ENCODE measurements at regions of chr20 and their contacts with region 1.

Region 1: GRCh38 chr20:38221119-38221589 is 39.4 kb downstream of the KIAA1755 start:
- DNase-seq: peak; percentile 73 to 91
- ATAC-seq: peak; percentile 72 to 81
- H3K4me3 ChIP-seq: no peak overlapping the region
- H3K27ac ChIP-seq: peak overlapping the region; percentile 90 to 98
- H3K4me1 ChIP-seq: peaks cover 51% of the 10 kb centered on the region
- CTCF ChIP-seq: peak; percentile 94
- EP300 ChIP-seq: no peak
- POLR2A ChIP-seq: no peak
- RAD21 ChIP-seq: peak; percentile 97 to 99

Region 2: GRCh38 chr20:38043512-38044300 is 177.4 kb before region 1 on chr20:
- CTCF ChIA-PET with region 1: interaction called, 356 read pairs
- POLR2A ChIA-PET with region 1: interaction called, 3 read pairs
- DNase-seq: peak; percentile 73 to 80
- ATAC-seq: peak; percentile 99 to 100
- H3K4me3 ChIP-seq: no peak overlapping the region
- H3K27ac ChIP-seq: peak overlapping the region in 1 of 2 experiments; percentile 41; a peak in 2 of 6 replicates
- H3K4me1 ChIP-seq: peaks cover 15% of the 10 kb centered on the region
- CTCF ChIP-seq: no peak
- EP300 ChIP-seq: no peak
- POLR2A ChIP-seq: no peak
- RAD21 ChIP-seq: no peak

Region 3: GRCh38 chr20:38094373-38094891 is 126.7 kb before region 1 on chr20:
- CTCF ChIA-PET with region 1: interaction called, 26 read pairs
- POLR2A ChIA-PET with region 1: no interaction called
- DNase-seq: peak; percentile 33 to 57
- ATAC-seq: peak in 1 of 2 experiments; percentile 75; a peak in 2 of 6 replicates
- H3K4me3 ChIP-seq: no peak overlapping the region
- H3K27ac ChIP-seq: peak overlapping the region; percentile 68 to 85
- H3K4me1 ChIP-seq: peaks cover 20% of the 10 kb centered on the region
- CTCF ChIP-seq: no peak
- EP300 ChIP-seq: peak in 1 of 2 experiments; percentile 15; a peak in 1 of 5 replicates
- POLR2A ChIP-seq: no peak
- RAD21 ChIP-seq: no peak

Region 4: DNA sequence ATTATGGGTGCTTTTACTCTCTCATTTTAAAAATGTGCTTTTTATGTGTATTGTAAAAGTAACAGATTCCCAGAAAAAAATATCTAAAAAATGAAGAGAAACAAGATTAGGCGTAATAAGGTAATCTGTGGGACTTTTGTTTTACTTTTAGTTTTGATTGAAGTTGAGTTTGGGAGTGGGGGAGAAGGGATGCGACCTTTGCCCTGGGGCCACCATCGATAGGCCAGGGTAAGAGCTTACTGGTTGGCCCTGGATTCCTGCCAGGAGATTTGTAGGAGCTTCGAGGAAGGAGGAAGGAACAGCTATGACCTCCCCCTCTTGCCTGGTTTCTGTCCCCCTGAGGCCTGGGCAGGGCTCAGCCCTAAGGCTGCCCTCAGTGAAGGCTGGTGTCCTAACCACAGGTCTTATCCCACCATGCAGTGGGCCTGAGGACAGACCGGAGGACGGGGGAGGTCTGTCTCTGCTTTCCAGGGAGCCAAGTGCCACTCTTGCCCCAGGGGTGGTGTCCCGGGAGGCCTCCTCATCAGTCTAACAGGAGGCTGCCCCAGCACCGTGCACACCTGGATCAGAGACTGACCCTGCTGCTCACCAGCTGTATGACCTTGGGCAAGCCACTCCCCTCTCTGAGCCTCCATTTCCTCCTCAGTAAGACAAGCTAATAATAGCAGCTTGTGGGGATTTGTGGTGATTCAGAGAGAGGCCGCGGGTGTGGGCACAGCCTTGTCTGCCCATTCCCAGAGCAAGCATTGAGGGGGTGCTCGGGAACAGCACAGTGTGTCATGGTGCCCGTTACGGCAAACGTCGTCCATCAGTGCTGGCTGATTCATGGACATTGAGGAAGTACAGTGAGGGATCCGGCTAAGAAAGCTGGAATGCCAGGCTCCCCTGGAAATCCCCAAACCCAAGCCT is 77.3 kb before region 1 on chr20:
- CTCF ChIA-PET with region 1: interaction called, 818 read pairs
- POLR2A ChIA-PET with region 1: interaction called, 3 read pairs
- DNase-seq: peak; percentile 63 to 91
- ATAC-seq: peak; percentile 69 to 74
- H3K4me3 ChIP-seq: no peak overlapping the region
- H3K27ac ChIP-seq: peak overlapping the region; percentile 83 to 95
- H3K4me1 ChIP-seq: peaks cover 75% of the 10 kb centered on the region
- CTCF ChIP-seq: no peak
- EP300 ChIP-seq: no peak
- POLR2A ChIP-seq: no peak
- RAD21 ChIP-seq: no peak

Region 5: GRCh38 chr20:38196592-38196991 is 24.6 kb before region 1 on chr20:
- CTCF ChIA-PET with region 1: interaction called, 350 read pairs
- POLR2A ChIA-PET with region 1: no interaction called
- DNase-seq: no peak
- ATAC-seq: peak in 1 of 2 experiments; percentile 40; a peak in 3 of 6 replicates
- H3K4me3 ChIP-seq: no peak overlapping the region
- H3K27ac ChIP-seq: peak overlapping the region in 1 of 2 experiments; percentile 51; a peak in 3 of 6 replicates
- H3K4me1 ChIP-seq: peaks cover 26% of the 10 kb centered on the region
- CTCF ChIP-seq: no peak
- EP300 ChIP-seq: no peak
- POLR2A ChIP-seq: no peak
- RAD21 ChIP-seq: no peak

Region 6: DNA sequence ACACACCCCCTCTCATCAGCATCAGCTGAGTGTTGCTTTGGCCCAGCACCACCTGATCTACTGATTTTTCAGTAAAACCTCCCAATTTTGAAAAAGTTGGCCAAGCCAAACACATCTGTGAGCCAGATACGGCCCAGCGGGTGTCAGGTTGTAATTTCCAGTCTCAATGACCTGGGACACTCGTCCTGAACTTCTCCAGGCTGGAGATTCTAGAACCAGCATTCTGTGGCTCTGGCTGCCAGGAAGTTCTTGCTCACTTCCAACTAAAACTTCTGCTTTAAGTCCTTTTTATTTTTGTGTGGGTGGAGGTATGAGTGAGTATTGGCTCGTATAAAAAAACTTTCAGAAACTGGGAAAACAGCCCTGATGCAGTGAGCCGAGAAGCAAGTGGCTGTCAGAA is 34.2 kb after region 1 on chr20:
- CTCF ChIA-PET with region 1: interaction called, 12 read pairs
- POLR2A ChIA-PET with region 1: no interaction called
- DNase-seq: no peak
- ATAC-seq: no peak
- H3K4me3 ChIP-seq: no peak overlapping the region
- H3K27ac ChIP-seq: no peak overlapping the region
- H3K4me1 ChIP-seq: no peaks in the 10 kb centered on the region; the same call in 2 of the 3 replicates
- CTCF ChIP-seq: no peak
- EP300 ChIP-seq: no peak
- POLR2A ChIP-seq: no peak
- RAD21 ChIP-seq: no peak

Region 7: DNA sequence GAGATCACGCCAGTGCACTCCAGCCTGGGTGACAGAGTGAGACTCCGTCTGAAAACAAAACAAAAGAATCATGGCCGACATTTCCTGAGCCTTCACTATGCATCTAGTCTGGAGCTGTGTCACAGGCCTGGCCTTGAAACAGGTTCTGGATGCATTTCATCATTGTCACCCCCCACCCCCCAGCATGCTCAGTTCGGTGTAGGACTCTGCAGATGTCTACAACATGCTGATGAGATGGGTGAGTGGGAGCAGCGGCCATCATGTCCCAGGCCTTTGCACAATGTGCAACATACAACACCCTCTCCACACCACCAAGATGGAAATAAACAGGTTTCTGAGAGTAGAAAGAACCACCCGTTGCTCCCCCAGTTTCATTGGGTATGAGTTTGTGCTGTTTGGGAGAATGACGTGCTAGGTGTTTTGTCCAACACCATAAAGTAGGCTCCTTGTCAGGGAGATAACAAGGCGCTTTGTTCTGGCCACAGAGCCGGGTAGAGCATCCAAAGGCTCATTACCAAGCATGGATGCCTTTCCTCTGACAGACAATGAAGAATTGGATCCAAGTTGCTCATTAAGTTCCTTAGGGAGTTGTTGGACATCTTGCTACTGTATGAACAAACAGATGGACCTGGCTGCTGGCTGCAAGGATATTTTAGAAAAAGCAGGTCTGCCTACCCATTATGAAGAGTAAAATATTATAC is 191.9 kb after region 1 on chr20:
- CTCF ChIA-PET with region 1: interaction called, 13 read pairs
- POLR2A ChIA-PET with region 1: no interaction called
- DNase-seq: no peak
- ATAC-seq: no peak
- H3K4me3 ChIP-seq: no peak overlapping the region
- H3K27ac ChIP-seq: no peak overlapping the region
- H3K4me1 ChIP-seq: peaks cover 5% of the 10 kb centered on the region; the same call in 2 of the 3 replicates
- CTCF ChIP-seq: no peak
- EP300 ChIP-seq: no peak
- POLR2A ChIP-seq: no peak
- RAD21 ChIP-seq: no peak

Region 8: DNA sequence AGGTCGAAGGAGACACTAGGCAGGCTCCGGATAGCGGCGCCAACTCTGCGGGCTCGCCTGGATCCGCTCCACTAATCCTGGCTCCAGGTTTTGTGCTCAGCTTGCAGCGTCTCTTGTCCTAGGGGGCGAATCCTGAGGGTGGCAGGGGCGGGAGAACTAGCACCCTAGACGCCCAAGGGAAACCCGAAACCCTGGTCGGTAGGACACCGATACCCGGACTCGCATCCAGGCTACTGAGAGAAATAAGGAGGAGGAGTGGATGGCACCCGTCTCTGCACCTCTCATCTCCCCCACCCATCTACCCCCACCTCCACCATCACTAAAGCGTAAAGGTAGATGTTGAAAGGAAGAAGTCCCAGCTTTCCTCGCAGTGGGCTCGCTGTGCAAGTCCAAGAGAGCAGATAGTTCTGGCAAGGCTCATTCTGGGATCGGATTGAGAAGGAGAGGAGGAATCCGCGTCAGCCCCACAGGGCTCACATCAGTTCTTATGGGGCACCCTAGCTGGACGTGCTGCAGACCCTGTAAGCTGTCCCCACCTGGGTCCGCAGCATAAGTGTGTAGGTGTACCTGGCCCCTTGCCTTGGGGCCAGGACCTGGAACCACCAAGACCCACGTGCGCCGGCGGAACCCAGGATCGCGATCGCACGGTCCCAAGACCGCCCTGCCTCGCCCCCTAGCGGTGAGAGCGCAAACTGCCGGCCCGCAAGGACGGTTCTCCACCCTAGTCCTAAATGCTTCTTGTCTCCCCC is 510.0 kb after region 1 on chr20:
- CTCF ChIA-PET with region 1: no interaction called
- POLR2A ChIA-PET with region 1: no interaction called
- DNase-seq: peak; percentile 79 to 93
- ATAC-seq: peak; percentile 79 to 92
- H3K4me3 ChIP-seq: peak overlapping the region; percentile 57
- H3K27ac ChIP-seq: peak overlapping the region; percentile 59; a peak in 5 of 6 replicates
- H3K4me1 ChIP-seq: peaks cover 5% of the 10 kb centered on the region; the same call in 1 of the 3 replicates
- CTCF ChIP-seq: peak; percentile 84
- EP300 ChIP-seq: no peak
- POLR2A ChIP-seq: 0 out of 2 replicates have a peak, but pooled peaks have one; percentile 5
- RAD21 ChIP-seq: peak; percentile 56 to 60